ENCODE measurements at regions of chr6 and their contacts with region 1.

Region 1: GRCh38 chr6:11033825-11034224 is 10.3 kb downstream of the ELOVL2 start:
- DNase-seq: no peak
- H3K4me3 ChIP-seq: no peak overlapping the region
- H3K27ac ChIP-seq: no peak overlapping the region
- H3K4me1 ChIP-seq: peaks cover 14% of the 10 kb centered on the region
- H3K27me3 ChIP-seq: no peaks in the 10 kb centered on the region
- CTCF ChIP-seq: no peak

Region 2: GRCh38 chr6:11009353-11009752 is 24.5 kb before region 1 on chr6:
- CTCF ChIA-PET with region 1: no interaction called
- POLR2A ChIA-PET with region 1: no interaction called
- intact Hi-C with region 1: no loop called
- DNase-seq: no peak
- H3K4me3 ChIP-seq: no peak overlapping the region
- H3K27ac ChIP-seq: no peak overlapping the region
- H3K4me1 ChIP-seq: peaks cover 8% of the 10 kb centered on the region
- H3K27me3 ChIP-seq: no peaks in the 10 kb centered on the region
- CTCF ChIP-seq: no peak

Region 3: DNA sequence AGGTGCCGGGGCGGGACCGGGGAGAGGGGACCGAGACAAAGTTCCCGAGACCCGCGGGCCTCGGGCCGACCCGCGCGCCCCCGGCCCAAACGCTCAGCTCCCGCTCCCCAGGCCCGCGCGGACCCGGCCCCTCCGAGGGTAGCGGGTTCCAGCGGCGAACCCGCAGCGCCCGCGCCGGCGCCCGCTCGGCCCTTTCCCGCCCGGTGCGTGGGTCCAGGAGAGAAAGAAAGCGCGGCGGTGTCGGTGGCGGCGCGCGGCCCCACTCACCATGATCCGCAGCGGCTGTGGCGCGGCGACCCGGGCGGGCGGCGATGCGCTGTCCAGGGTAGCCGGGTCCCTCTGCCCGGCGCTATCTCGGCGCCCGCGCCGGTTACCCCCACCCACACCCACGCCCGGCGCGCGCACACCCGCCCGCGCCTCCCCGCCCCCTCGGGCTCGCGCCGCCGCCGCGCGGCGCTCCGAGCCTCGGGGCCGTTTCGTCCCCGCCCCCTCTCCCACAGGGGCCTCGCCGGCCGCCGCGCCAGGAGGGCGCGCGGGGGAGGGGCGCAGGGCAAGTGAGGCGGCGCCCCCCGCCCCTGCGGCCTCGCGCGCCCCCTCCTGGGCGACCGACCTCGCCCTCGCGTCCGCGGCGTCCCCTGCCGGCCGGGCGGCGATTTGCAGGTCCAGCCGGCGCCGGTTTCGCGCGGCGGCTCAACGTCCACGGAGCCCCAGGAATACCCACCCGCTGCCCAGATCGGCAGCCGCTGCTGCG is 10.3 kb after region 1 on chr6 and contains the start of gene ELOVL2:
- CTCF ChIA-PET with region 1: interaction called, 18 read pairs
- POLR2A ChIA-PET with region 1: no interaction called
- intact Hi-C with region 1: no loop called
- DNase-seq: peak; percentile 65
- H3K4me3 ChIP-seq: peak within 1 kb of the TSS; percentile 82
- H3K27ac ChIP-seq: peak within 1 kb of the TSS; percentile 58
- H3K4me1 ChIP-seq: peaks cover 8% of the 10 kb centered on the region
- H3K27me3 ChIP-seq: peaks cover 2% of the 10 kb centered on the region
- CTCF ChIP-seq: peak; percentile 72
- total RNA-seq, gene ELOVL2: 12.7 and 14.1 TPM in 2 replicates